ENCODE measurements at regions of chr7 and their contacts with region 1.

Region 1: DNA sequence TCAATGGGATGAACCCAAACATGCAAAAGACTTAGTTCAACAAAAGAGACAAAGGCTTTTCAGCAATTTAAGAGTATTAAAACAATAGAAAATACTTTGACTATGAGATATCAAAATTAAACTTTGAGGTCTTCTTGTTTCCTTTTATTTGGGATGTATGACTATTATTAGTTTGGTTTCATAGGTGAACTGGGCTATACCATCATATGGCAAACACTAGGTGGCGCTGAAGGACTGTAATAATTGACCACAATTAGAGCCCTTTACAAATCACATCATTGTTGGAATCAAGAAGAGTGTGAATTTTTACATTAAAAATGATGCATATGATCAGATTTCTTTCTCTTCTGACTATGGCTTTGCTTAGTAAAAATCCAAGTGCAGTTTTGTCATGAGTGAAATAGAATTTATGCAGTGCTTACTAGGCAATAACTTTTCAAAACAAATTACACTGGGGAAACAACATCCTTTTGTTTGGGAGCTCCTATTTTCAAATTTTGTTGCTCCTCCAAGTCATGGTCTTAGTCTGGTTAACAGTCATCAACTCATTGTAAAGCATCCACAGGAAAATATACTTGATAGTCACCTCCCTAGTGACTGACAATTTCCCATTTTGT is 14.7 kb upstream of the NXPH1 start:
- DNase-seq: peak; percentile 56 to 80 (median 60)
- ATAC-seq: peak; percentile 95
- H3K4me3 ChIP-seq: no peak overlapping the region
- H3K27ac ChIP-seq: no peak overlapping the region
- H3K4me1 ChIP-seq: no peaks in the 10 kb centered on the region
- H3K27me3 ChIP-seq: no peaks in the 10 kb centered on the region; a peak in 2 of 5 replicates
- CTCF ChIP-seq: peak; percentile 48 to 84 (median 68); a peak in 5 of 6 replicates
- EP300 ChIP-seq: no peak
- POLR2A ChIP-seq: no peak
- RAD21 ChIP-seq: peak; percentile 78 to 90

Region 2: DNA sequence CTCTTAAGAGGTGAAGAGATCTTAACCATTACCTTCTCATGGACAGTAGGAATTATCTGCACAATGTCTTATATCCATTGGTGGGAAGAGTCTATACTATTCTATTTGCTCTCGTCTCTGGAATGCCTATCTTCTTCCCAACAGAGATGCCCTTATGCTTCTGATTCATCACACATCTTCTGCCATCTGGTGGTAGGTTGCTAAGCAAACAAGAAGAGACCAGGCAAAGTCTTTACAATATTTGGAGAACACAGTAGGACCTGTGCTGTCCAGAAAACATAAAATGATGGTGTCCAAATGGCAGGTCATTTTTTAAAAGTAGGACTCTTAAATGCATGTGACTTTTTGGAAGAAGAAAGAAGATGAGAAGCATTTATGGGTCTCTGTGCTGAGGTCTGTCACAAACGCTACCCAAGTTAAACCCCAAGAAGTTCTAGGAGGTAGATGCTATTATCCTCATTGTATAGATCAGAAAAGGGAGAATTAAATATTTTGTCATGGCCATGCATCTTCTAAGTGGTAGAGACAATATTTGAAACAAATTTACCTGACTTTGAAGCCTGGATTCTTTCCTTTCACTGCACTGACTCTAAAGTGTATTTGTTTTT is 53.1 kb before region 1 on chr7:
- CTCF ChIA-PET with region 1: no interaction called
- POLR2A ChIA-PET with region 1: no interaction called
- in situ Hi-C with region 1: no loop called
- intact Hi-C with region 1: no loop called
- DNase-seq: peak in 3 of 4 experiments; percentile 18 to 65 (median 22)
- ATAC-seq: peak; percentile 92
- H3K4me3 ChIP-seq: no peak overlapping the region
- H3K27ac ChIP-seq: no peak overlapping the region
- H3K4me1 ChIP-seq: no peaks in the 10 kb centered on the region
- H3K27me3 ChIP-seq: no peaks in the 10 kb centered on the region
- CTCF ChIP-seq: peak; percentile 59 to 67 (median 61)
- EP300 ChIP-seq: no peak
- POLR2A ChIP-seq: no peak
- RAD21 ChIP-seq: peak; percentile 47 to 76; a peak in 3 of 4 replicates

Region 3: DNA sequence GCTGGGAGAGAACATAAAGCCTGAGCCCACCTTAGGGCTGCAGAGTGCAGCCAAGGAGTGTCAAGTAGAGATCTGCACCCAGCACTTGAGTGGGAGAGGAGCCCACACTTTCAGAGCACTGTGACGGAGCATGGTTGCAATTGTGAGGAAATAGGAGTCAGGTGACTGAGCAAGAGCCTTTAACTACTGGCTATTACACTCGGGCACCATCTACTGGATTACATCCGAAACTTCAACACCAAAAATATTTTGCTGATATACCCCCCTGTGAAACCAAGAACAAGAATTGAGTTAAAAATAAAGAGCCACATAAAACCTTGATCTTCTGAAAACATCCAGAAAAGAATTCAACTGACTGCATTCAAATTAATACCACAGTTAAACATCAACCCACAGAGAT is 672.5 kb after region 1 on chr7:
- CTCF ChIA-PET with region 1: no interaction called
- POLR2A ChIA-PET with region 1: no interaction called
- in situ Hi-C with region 1: no loop called
- intact Hi-C with region 1: loop called (anchors 1 kb)
- DNase-seq: peak in 2 of 4 experiments; percentile 9 to 14
- ATAC-seq: peak; percentile 48; the same call in 2 of the 3 replicates
- H3K4me3 ChIP-seq: no peak overlapping the region
- H3K27ac ChIP-seq: no peak overlapping the region
- H3K4me1 ChIP-seq: no peaks in the 10 kb centered on the region
- H3K27me3 ChIP-seq: no peaks in the 10 kb centered on the region
- CTCF ChIP-seq: peak; percentile 16 to 43 (median 28); a peak in 3 of 6 replicates
- EP300 ChIP-seq: no peak
- POLR2A ChIP-seq: no peak
- RAD21 ChIP-seq: peak; percentile 17 to 55; a peak in 2 of 4 replicates

Region 4: GRCh38 chr7:10412422-10413019 is 1993.8 kb after region 1 on chr7:
- CTCF ChIA-PET with region 1: no interaction called
- POLR2A ChIA-PET with region 1: no interaction called
- in situ Hi-C with region 1: loop called (anchors 25 kb)
- intact Hi-C with region 1: loop called (anchors 2 kb)
- DNase-seq: peak; percentile 33 to 58 (median 36)
- ATAC-seq: peak; percentile 84
- H3K4me3 ChIP-seq: no peak overlapping the region
- H3K27ac ChIP-seq: no peak overlapping the region
- H3K4me1 ChIP-seq: no peaks in the 10 kb centered on the region
- H3K27me3 ChIP-seq: no peaks in the 10 kb centered on the region
- CTCF ChIP-seq: peak; percentile 35 to 60 (median 36); a peak in 4 of 6 replicates
- EP300 ChIP-seq: no peak
- POLR2A ChIP-seq: no peak
- RAD21 ChIP-seq: peak; percentile 44 to 57

Measured in K562 (cell line).